Heart right ventricle (tissue), 16 donors: ENCODE measurements at regions of chr4 and their contacts with region 1.

Region 1: DNA sequence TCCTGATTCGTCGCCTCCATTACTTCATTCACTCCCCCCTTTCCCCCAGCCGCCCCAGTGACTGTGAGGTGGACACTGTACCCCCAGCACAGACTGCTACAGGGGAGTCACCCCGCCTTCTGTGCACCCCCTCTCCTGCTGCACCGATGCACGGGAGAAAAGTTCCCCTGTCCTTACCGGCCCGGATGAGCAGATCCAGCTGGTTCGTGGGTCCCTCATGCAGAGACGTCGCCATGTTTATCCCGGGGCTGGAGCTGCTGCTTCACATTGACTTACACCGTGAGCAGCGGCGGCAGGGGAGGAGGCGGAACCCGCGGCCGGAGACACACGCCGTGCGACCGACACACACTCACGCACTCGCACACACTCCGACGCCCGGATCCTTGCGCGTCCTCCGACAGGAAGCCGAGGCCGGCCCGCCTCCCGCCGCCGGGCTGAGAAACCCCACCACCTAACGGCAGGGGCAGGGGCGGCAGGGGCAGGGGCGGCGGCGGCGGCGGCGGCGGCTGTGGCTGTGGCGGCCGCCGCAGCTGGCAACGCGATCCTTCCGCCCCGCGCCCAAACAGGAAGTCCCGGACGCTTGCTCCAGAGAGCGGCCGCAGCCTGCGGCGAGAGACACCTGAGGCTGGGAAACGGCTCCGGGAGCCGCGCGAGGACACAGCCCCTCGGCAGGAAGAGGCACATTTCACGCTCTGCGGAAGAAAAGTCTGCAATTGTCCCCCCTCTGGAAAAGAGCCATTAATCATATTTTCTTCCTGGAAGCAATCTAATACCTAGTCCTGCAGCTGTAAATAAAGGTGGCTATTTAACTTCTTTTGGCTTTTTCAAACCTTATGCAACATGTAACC is 68.6 kb downstream of the NOCT start:
- DNase-seq: peak; percentile 89 to 90
- ATAC-seq: peak; percentile 71 to 92 (median 80)
- H3K4me3 ChIP-seq: peak overlapping the region; percentile 64 to 89 (median 78)
- H3K27ac ChIP-seq: peak overlapping the region; percentile 88 to 95 (median 93)
- H3K4me1 ChIP-seq: peaks cover 2 to 44% (median 38%) of the 10 kb centered on the region in 9 donors
- H3K27me3 ChIP-seq: no peaks in the 10 kb centered on the region
- CTCF ChIP-seq: peak in 8 of 9 donors; percentile 10 to 53 (median 39)

Region 2: DNA sequence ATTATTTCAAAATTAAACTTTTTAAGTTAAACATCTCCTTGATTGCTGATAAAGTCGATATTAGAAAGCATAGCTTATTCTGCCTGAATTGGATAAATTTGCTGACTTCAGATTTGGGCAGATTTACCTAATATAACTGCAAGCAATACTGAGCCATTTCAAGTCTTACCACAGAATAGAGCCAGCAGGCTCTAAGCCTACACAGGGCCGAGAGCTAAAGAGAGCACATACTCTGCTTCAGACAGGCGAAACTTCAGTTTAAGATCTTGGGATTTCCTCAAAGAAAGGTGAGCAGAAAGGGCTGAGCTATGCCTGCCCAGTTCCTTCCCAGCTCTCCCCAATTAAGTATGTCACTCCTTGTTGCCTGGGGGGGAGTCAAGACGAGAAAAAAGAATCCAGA is 309.2 kb before region 1 on chr4:
- intact Hi-C with region 1: no loop called
- DNase-seq: no peak
- ATAC-seq: no peak
- H3K4me3 ChIP-seq: no peak overlapping the region
- H3K27ac ChIP-seq: no peak overlapping the region
- H3K4me1 ChIP-seq: no peaks in the 10 kb centered on the region
- H3K27me3 ChIP-seq: no peaks in the 10 kb centered on the region
- CTCF ChIP-seq: no peak

Region 3: GRCh38 chr4:139030614-139031235 is 53.5 kb before region 1 on chr4:
- intact Hi-C with region 1: loop called in 7 of 10 experiments (anchors 5 kb)
- DNase-seq: peak in 1 of 2 donors; percentile 80
- ATAC-seq: peak in 7 of 8 donors; percentile 27 to 70 (median 44)
- H3K4me3 ChIP-seq: no peak overlapping the region
- H3K27ac ChIP-seq: peak overlapping the region in 1 of 10 donors; percentile 82
- H3K4me1 ChIP-seq: peaks cover 0 to 41% (median 9%) of the 10 kb centered on the region in 9 donors
- H3K27me3 ChIP-seq: no peaks in the 10 kb centered on the region
- CTCF ChIP-seq: peak; percentile 60 to 87 (median 81)

Region 4: GRCh38 chr4:139108567-139109128 is 24.5 kb after region 1 on chr4:
- intact Hi-C with region 1: no loop called
- DNase-seq: no peak
- ATAC-seq: no peak
- H3K4me3 ChIP-seq: no peak overlapping the region
- H3K27ac ChIP-seq: no peak overlapping the region
- H3K4me1 ChIP-seq: no peaks in the 10 kb centered on the region
- H3K27me3 ChIP-seq: no peaks in the 10 kb centered on the region
- CTCF ChIP-seq: no peak

Region 5: GRCh38 chr4:139301113-139301820 is 217.1 kb after region 1 on chr4 and contains the start of gene NAA15:
- intact Hi-C with region 1: loop called in 4 of 10 experiments (anchors 5 kb)
- DNase-seq: peak; percentile 98 to 99
- ATAC-seq: peak; percentile 97 to 98 (median 98)
- H3K4me3 ChIP-seq: peak within 1 kb of the TSS; percentile 72 to 99 (median 84)
- H3K27ac ChIP-seq: peak within 1 kb of the TSS; percentile 59 to 94 (median 90)
- H3K4me1 ChIP-seq: peaks cover 0 to 67% (median 36%) of the 10 kb centered on the region in 9 donors
- H3K27me3 ChIP-seq: no peaks in the 10 kb centered on the region
- CTCF ChIP-seq: no peak
- total RNA-seq, gene NAA15: 26.1 to 45.4 (median 33.7) TPM